ENCODE measurements at regions of chr9 and their contacts with region 1.

Region 1: GRCh38 chr9:5437254-5438216 is at the start of gene PLGRKT:
- DNase-seq: peak; percentile 77 to 91 (median 89)
- ATAC-seq: peak; percentile 96
- H3K4me3 ChIP-seq: peak within 1 kb of the TSS; percentile 84
- H3K4me3 Mint-ChIP-seq: peak within 1 kb of the TSS; percentile 86 to 98 (median 96)
- H3K27ac ChIP-seq: peak within 1 kb of the TSS; percentile 81
- H3K27ac Mint-ChIP-seq: peak within 1 kb of the TSS; percentile 90 to 100 (median 98)
- H3K4me1 ChIP-seq: peaks cover 18 to 19% of the 10 kb centered on the region in 2 donors
- H3K4me1 Mint-ChIP-seq: peaks cover 7 to 50% (median 36%) of the 10 kb centered on the region in 7 donors
- H3K27me3 ChIP-seq: no peaks in the 10 kb centered on the region
- H3K27me3 Mint-ChIP-seq: no peaks in the 10 kb centered on the region
- total RNA-seq, gene PLGRKT: 15.8 to 31.7 (median 16.8) TPM

Region 2: GRCh38 chr9:4382722-4383317 is 1054.7 kb before region 1 on chr9:
- CTCF ChIA-PET with region 1: no interaction called
- POLR2A ChIA-PET with region 1: no interaction called
- intact Hi-C with region 1: loop called in 1 of 2 experiments (anchors 5 kb)
- DNase-seq: peak in 6 of 9 donors; percentile 7 to 54 (median 42)
- ATAC-seq: no peak
- H3K4me3 ChIP-seq: no peak overlapping the region
- H3K4me3 Mint-ChIP-seq: no peak overlapping the region
- H3K27ac ChIP-seq: no peak overlapping the region
- H3K27ac Mint-ChIP-seq: no peak overlapping the region
- H3K4me1 ChIP-seq: no peaks in the 10 kb centered on the region
- H3K4me1 Mint-ChIP-seq: peaks cover 0 to 10% (median 0%) of the 10 kb centered on the region in 7 donors
- H3K27me3 ChIP-seq: no peaks in the 10 kb centered on the region
- H3K27me3 Mint-ChIP-seq: peaks cover 0 to 4% (median 0%) of the 10 kb centered on the region in 5 donors

Region 3: GRCh38 chr9:4762108-4762885 is 675.2 kb before region 1 on chr9:
- CTCF ChIA-PET with region 1: interaction called, 3 read pairs
- POLR2A ChIA-PET with region 1: no interaction called
- intact Hi-C with region 1: loop called in 1 of 2 experiments (anchors 1 kb)
- DNase-seq: peak; percentile 56 to 83 (median 76)
- ATAC-seq: peak; percentile 79
- H3K4me3 ChIP-seq: no peak overlapping the region
- H3K4me3 Mint-ChIP-seq: peak overlapping the region; percentile 39 to 79 (median 64)
- H3K27ac ChIP-seq: no peak overlapping the region
- H3K27ac Mint-ChIP-seq: peak overlapping the region in 5 of 9 donors; percentile 29 to 83 (median 51)
- H3K4me1 ChIP-seq: peaks cover 0 to 3% of the 10 kb centered on the region in 2 donors
- H3K4me1 Mint-ChIP-seq: peaks cover 0 to 20% (median 10%) of the 10 kb centered on the region in 7 donors
- H3K27me3 ChIP-seq: no peaks in the 10 kb centered on the region
- H3K27me3 Mint-ChIP-seq: peaks cover 0 to 11% (median 7%) of the 10 kb centered on the region in 5 donors

Region 4: DNA sequence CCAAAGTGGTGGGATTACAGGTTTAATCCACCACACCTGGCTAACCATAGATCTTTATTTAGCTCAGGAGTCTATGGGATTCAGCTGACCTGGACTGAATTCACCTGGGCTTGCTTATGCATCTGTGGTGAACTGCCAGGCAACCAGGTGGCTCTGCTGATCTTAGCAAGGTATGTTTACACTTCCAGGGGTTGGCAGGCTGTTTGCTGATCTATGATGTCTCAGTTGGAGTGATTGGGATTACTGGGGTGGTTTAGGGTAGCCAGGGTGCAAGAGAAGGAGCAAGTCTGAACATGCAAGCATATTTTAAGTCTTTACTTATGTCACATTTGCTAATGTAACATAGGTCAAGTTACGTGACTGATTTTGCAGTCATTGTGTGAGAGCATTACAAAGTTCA is 516.1 kb before region 1 on chr9:
- CTCF ChIA-PET with region 1: no interaction called
- POLR2A ChIA-PET with region 1: no interaction called
- intact Hi-C with region 1: no loop called
- DNase-seq: no peak
- ATAC-seq: no peak
- H3K4me3 ChIP-seq: no peak overlapping the region
- H3K4me3 Mint-ChIP-seq: no peak overlapping the region
- H3K27ac ChIP-seq: no peak overlapping the region
- H3K27ac Mint-ChIP-seq: no peak overlapping the region
- H3K4me1 ChIP-seq: no peaks in the 10 kb centered on the region
- H3K4me1 Mint-ChIP-seq: peaks cover 0 to 20% (median 4%) of the 10 kb centered on the region in 7 donors
- H3K27me3 ChIP-seq: no peaks in the 10 kb centered on the region
- H3K27me3 Mint-ChIP-seq: no peaks in the 10 kb centered on the region

Region 5: GRCh38 chr9:5089737-5090136 is 347.8 kb before region 1 on chr9:
- CTCF ChIA-PET with region 1: no interaction called
- POLR2A ChIA-PET with region 1: no interaction called
- intact Hi-C with region 1: loop called in 1 of 2 experiments (anchors 10 kb)
- DNase-seq: no peak
- ATAC-seq: no peak
- H3K4me3 ChIP-seq: no peak overlapping the region
- H3K4me3 Mint-ChIP-seq: no peak overlapping the region
- H3K27ac ChIP-seq: no peak overlapping the region
- H3K27ac Mint-ChIP-seq: no peak overlapping the region
- H3K4me1 ChIP-seq: no peaks in the 10 kb centered on the region
- H3K4me1 Mint-ChIP-seq: no peaks in the 10 kb centered on the region
- H3K27me3 ChIP-seq: no peaks in the 10 kb centered on the region
- H3K27me3 Mint-ChIP-seq: no peaks in the 10 kb centered on the region

Region 6: GRCh38 chr9:5301544-5301943 is 136.0 kb before region 1 on chr9:
- CTCF ChIA-PET with region 1: no interaction called
- POLR2A ChIA-PET with region 1: no interaction called
- intact Hi-C with region 1: loop called in 1 of 2 experiments (anchors 2 kb)
- DNase-seq: peak in 6 of 9 donors; percentile 16 to 34 (median 21)
- ATAC-seq: no peak
- H3K4me3 ChIP-seq: no peak overlapping the region
- H3K4me3 Mint-ChIP-seq: peak overlapping the region; percentile 5 to 80 (median 69)
- H3K27ac ChIP-seq: no peak overlapping the region
- H3K27ac Mint-ChIP-seq: peak overlapping the region in 7 of 9 donors; percentile 52 to 91 (median 78)
- H3K4me1 ChIP-seq: peaks cover 7 to 11% of the 10 kb centered on the region in 2 donors
- H3K4me1 Mint-ChIP-seq: peaks cover 15 to 40% (median 25%) of the 10 kb centered on the region in 7 donors
- H3K27me3 ChIP-seq: no peaks in the 10 kb centered on the region
- H3K27me3 Mint-ChIP-seq: no peaks in the 10 kb centered on the region

Region 7: GRCh38 chr9:5450359-5451091 is 13.0 kb after region 1 on chr9 and contains the start of gene CD274:
- CTCF ChIA-PET with region 1: interaction called, 22 read pairs
- POLR2A ChIA-PET with region 1: interaction called, 73 read pairs
- intact Hi-C with region 1: loop called (anchors 1 kb)
- DNase-seq: peak; percentile 61 to 89 (median 80)
- ATAC-seq: peak; percentile 95
- H3K4me3 ChIP-seq: peak within 1 kb of the TSS; percentile 78
- H3K4me3 Mint-ChIP-seq: peak within 1 kb of the TSS; percentile 92 to 98 (median 95)
- H3K27ac ChIP-seq: peak within 1 kb of the TSS; percentile 94
- H3K27ac Mint-ChIP-seq: peak within 1 kb of the TSS; percentile 97 to 99 (median 98)
- H3K4me1 ChIP-seq: peaks cover 0 to 11% of the 10 kb centered on the region in 2 donors
- H3K4me1 Mint-ChIP-seq: peaks cover 33 to 69% (median 62%) of the 10 kb centered on the region in 7 donors
- H3K27me3 ChIP-seq: no peaks in the 10 kb centered on the region
- H3K27me3 Mint-ChIP-seq: no peaks in the 10 kb centered on the region
- total RNA-seq, gene CD274: 2.9 to 38.7 (median 7.8) TPM

Region 8: DNA sequence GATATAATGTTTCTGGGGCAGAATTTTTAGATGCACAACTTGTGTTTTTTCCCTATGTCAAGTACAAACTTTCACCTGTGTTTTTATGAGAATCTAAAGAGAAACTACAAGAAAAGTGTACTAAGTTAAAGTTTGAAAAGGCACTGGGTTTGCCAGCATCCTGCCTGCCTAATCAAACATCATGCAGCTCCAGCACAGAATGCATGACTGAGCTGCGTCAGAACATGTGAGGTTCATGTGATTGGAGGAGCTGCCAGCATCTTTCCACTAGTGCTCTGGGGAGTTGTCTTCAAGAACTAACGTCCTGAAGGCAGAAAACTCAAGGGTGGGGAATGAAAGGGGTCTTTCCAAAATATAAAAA is 145.3 kb after region 1 on chr9:
- CTCF ChIA-PET with region 1: interaction called, 10 read pairs
- POLR2A ChIA-PET with region 1: interaction called, 50 read pairs
- intact Hi-C with region 1: loop called in 1 of 2 experiments (anchors 1 kb)
- DNase-seq: peak in 7 of 9 donors; percentile 55 to 81 (median 68)
- ATAC-seq: peak; percentile 82
- H3K4me3 ChIP-seq: no peak overlapping the region
- H3K4me3 Mint-ChIP-seq: peak overlapping the region in 7 of 10 donors; percentile 0 to 43 (median 39)
- H3K27ac ChIP-seq: peak overlapping the region; percentile 43
- H3K27ac Mint-ChIP-seq: peak overlapping the region; percentile 48 to 98 (median 86)
- H3K4me1 ChIP-seq: peaks cover 24 to 30% of the 10 kb centered on the region in 2 donors
- H3K4me1 Mint-ChIP-seq: peaks cover 28 to 79% (median 62%) of the 10 kb centered on the region in 7 donors
- H3K27me3 ChIP-seq: no peaks in the 10 kb centered on the region
- H3K27me3 Mint-ChIP-seq: no peaks in the 10 kb centered on the region

Measured in naive thymus-derived CD4-positive, alpha-beta T cell (primary cell).